ENCODE measurements at regions of chr2 and their contacts with region 1.

Region 1: DNA sequence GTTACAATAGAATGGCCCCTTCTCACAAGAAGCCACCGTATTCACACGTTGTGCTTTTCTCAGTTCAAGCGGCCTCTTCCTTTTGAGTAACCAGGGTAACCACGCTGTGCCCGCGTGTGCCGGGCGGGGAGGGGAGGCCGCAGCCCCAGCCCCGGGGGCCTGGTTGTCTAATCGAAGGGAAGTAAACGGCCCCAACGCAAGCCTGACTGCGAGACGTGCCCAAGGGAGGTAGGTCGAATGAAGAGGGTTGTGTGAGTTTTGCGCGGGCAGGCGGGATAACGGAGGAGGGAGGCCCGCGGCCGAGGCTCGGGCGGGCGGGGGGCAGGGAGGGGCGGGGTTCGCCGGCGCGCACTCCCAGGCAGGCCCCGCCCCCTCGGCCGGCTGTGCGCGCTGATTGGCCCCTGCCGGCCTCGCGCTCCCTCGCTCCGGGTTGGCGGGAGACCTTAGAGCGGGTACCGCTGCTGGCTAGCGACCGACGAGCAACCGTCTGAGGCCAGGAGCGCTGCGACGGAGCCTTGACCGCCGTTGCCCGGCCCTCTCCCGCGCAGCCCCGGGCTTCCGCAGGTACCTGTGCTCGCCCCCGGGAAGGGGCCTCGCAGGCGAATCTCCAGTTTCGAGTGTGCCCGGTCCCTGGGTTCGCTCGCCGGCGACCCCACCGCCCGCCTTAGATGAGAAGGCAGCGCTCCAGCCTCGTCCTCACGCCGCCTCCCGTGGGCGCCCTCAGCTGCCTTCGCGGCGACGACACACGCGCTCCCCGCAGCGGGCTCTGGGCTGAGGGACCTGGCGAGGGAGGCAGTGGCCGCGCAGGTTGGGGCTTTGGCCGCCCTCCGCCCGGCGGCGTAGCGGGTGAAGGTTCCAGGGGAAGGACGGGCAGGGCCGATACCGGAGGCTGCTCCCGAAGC is at the start of gene SPDYA:
- DNase-seq: peak; percentile 57 to 76
- ATAC-seq: peak; percentile 90 to 96 (median 94)
- H3K4me3 ChIP-seq: peak within 1 kb of the TSS; percentile 22 to 64 (median 58)
- H3K27ac ChIP-seq: no peak within 1 kb of the TSS
- H3K4me1 ChIP-seq: peaks cover 0 to 21% (median 12%) of the 10 kb centered on the region in 9 donors
- H3K27me3 ChIP-seq: peaks cover 0 to 6% (median 0%) of the 10 kb centered on the region in 7 donors
- CTCF ChIP-seq: peak in 3 of 9 donors; percentile 16 to 22 (median 19)
- total RNA-seq, gene SPDYA: 0.16 to 0.46 (median 0.28) TPM

Region 2: GRCh38 chr2:28566521-28567041 is 244.1 kb before region 1 on chr2:
- intact Hi-C with region 1: loop called in 1 of 10 experiments (anchors 10 kb)
- DNase-seq: peak; percentile 83 to 88
- ATAC-seq: peak; percentile 92 to 98 (median 95)
- H3K4me3 ChIP-seq: peak overlapping the region; percentile 36 to 82 (median 61)
- H3K27ac ChIP-seq: peak overlapping the region in 9 of 10 donors; percentile 34 to 81 (median 61)
- H3K4me1 ChIP-seq: peaks cover 0 to 13% (median 4%) of the 10 kb centered on the region in 9 donors
- H3K27me3 ChIP-seq: no peaks in the 10 kb centered on the region
- CTCF ChIP-seq: peak; percentile 98 to 100 (median 100)

Region 3: DNA sequence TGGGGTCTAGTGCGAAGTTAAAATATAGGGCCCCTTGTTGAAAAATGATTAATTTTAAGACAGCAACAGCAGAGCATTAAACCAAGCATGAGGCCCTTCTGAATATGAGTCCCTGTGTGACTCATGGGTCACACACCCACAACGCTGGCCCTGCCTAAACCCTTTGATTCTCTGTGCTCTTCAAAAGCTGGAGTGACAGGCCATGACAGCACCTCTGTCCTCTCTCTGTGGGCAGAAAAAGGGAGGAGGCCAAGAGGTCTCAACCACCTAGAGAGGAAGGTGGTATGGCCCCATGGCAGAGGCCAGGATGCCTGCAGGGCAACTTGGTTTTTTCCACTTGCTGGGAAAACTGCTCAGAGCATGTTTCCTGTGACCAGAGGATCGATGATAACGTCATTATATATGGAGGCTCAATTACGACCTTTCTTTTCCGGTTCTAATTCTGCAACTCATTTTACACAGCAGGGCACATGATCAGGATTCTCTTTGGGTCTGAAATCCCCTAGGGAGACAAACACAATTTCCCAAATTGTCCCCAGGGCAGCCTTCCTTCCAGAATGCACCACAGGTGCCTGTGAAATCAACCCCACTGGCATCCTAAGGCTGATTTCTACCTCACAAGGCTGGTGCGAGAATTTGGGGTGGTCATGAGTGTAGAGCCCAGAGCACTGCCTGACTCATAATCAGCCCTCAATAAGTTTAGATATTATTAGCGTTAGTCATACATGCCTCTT is 161.0 kb before region 1 on chr2:
- intact Hi-C with region 1: no loop called
- DNase-seq: no peak
- ATAC-seq: no peak
- H3K4me3 ChIP-seq: no peak overlapping the region
- H3K27ac ChIP-seq: no peak overlapping the region
- H3K4me1 ChIP-seq: peaks cover 0 to 7% (median 3%) of the 10 kb centered on the region in 9 donors
- H3K27me3 ChIP-seq: no peaks in the 10 kb centered on the region
- CTCF ChIP-seq: no peak

Measured in heart right ventricle (tissue), 16 donors.